KBM-7 (cell line): ENCODE measurements at regions of chr3 and their contacts with region 1.

Region 1: DNA sequence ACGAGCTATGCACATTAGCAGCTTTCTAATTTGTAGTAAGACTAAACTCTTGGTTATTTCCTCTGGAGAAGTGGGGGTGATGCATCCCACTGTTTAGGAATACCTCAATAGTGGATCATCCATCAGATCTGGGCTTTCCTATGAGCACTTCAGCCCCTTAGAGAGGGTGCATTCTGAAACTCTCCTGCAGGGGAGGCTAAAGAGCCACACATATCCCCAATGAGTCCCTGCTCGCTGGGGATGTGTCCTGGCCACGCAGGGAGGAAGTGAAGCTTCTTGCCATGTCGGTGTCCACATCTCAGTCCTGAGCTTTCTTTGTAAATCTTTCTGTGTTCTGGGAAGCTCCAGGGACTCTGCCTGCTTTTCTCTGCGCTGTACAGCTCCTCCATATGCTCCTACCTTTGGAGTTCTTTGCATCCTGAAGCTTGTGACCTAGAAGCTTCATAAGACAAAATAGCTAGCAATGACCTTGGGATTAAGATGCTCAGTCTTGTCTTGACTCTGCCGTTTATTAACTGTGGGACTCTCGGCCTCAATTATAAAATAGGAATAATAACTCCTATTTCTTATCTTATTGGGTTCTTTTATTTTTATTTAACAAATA is 28.3 kb upstream of the MASP1 start:
- DNase-seq: peak; percentile 85

Region 2: DNA sequence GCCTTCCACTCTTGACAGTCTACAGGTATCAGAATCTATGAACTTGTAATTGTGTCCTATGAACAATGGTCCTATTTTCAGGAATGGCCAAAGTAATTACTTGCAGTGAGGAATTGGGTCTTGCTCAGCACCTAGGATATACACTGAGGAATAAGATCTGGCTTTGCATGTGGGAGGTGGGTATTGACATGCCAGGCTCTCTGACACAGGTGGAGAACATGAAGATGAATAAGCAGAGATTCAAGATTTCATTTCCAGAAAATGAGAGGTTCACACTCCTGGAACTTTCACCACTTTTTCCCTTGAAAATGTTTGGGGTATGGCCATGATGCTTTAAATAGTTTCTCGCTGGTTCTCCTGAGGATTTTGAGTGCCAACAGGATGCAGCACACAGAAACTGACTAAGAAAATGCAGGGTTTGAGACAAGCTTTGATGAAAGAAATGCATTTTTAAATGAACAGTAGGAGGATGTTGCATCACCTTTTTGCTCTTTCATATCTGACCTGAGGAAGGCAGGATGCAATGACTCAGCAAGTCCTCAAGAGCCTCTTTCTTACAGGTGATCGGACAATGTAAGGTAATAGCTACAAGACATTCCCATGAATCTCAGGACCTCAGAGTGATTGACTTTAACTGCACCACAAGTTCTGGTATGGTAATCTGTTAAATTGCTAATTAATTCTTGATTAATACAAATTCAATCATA is 650.3 kb before region 1 on chr3:
- in situ Hi-C with region 1: no loop called
- DNase-seq: no peak

Region 3: GRCh38 chr3:187679638-187680396 is 360.0 kb after region 1 on chr3:
- in situ Hi-C with region 1: loop called (anchors 10 kb)
- DNase-seq: peak; percentile 78

Region 4: GRCh38 chr3:187694801-187695200 is 375.0 kb after region 1 on chr3:
- in situ Hi-C with region 1: loop called (anchors 10 kb)
- DNase-seq: no peak